ENCODE measurements at regions of chr18 and their contacts with region 1.

Region 1: DNA sequence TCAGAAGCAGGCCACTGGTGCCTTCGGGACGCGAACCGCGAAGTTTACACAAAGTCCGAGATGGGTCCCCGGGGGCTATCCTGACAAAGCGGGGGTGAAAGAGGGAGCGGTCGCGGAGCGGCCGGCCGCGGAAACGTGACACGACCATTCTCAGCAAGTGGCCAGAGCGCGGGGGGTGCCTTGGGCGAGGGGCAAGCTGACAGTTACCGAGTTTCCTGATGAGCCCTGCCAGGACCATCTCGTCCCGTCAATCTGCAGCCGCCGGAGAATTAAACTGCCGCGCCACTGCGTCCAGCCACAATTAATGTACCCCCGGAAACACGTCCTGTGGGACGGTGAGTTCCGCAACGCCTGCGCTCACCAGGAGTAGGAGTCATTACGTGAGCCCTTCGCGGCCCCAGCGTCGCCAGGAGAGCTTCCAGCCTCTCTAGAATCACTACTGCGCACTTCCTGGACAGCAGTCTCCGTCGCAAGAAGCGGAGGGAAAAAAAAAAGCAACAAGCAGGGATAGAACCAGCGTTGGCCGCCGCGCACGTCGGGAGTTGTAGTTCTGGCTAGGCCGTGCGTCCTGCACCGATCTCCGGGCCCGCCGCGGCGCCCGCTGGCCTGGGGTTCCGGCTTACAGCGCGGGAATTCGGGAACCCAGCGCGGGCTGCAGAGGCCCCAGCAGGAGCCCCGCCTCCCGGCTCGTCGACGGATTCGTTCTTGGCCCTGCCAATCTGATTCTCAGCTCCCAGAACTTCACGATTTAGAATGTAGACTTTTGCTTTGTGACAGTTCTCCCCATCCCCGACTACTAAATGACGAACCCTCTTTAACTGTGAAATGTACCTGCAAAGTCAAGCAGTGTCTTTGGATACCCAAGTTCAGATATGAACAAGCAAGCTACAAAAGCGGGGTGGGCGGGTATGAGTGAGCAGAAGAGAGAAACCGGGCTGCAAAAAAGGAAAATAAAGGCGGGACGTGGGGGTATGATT is at the start of gene RTTN:
- DNase-seq: peak; percentile 81 to 91
- ATAC-seq: peak; percentile 95 to 97
- H3K4me3 ChIP-seq: peak within 1 kb of the TSS; percentile 65 to 91 (median 87)
- H3K27ac ChIP-seq: peak within 1 kb of the TSS; percentile 89 to 97 (median 94)
- H3K4me1 ChIP-seq: peaks cover 10 to 18% of the 10 kb centered on the region in 2 donors
- H3K27me3 ChIP-seq: no peaks in the 10 kb centered on the region
- CTCF ChIP-seq: peak in 2 of 5 experiments; percentile 10 to 40
- POLR2A ChIP-seq: peak in 1 of 2 donors; percentile 18
- total RNA-seq, gene RTTN: 3.2 to 9.7 (median 4.9) TPM

Region 2: DNA sequence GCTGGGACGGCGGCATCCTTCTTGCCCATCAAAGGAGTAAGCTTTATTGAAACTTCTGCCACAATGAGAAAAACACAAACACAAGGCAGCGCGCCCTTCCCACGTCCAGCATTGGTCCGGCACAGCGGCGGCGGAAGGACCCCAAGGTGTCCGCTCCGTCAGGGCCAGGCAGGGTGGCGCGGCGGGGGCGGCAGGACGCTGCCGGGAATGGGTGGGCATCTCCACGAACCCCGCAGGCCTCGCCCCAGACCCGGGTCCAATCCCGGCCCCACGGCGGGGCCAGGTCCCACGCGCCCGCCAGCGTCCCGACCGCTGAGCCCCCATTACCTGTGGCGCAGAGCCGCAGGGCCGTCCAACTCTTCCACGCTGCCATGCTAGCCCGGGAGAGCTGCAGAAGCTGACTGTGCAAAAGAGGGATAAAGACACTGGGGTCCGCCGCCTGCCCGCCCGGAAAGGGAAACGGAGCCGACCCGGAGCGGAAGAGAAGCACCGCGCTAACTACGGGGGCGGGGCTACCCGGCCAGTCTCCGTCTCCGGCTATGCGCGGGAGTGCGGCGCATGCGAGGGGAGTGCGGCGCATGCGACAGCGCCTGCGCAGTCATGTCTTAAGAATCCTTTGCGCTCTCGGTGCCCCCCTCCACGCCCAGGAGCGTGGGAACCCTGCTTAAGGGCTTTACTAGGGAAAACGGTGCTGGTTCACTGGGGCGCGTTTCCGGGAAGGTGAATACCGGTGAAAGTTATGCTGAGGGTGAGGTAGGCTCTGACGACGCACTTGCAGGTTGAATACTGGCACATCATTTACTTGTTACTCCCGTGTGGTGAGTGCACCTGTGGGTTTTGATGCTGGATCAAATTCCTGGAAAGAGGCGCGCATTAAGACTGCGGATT is 1490.9 kb before region 1 on chr18 and contains the start of gene TMX3:
- in situ Hi-C with region 1: no loop called
- intact Hi-C with region 1: loop called (anchors 10 kb)
- DNase-seq: peak; percentile 64 to 81
- ATAC-seq: peak; percentile 94 to 95
- H3K4me3 ChIP-seq: peak within 1 kb of the TSS; percentile 82 to 99 (median 90)
- H3K27ac ChIP-seq: peak within 1 kb of the TSS; percentile 72 to 83 (median 77)
- H3K4me1 ChIP-seq: peaks cover 16 to 20% of the 10 kb centered on the region in 2 donors
- H3K27me3 ChIP-seq: no peaks in the 10 kb centered on the region
- CTCF ChIP-seq: no peak
- POLR2A ChIP-seq: peak in 1 of 2 donors; percentile 13
- total RNA-seq, gene TMX3: 13.7 to 23.3 (median 16.7) TPM

Region 3: GRCh38 chr18:70288851-70289328 is 83.2 kb after region 1 on chr18 and contains the start of gene SOCS6:
- in situ Hi-C with region 1: loop called in 1 of 4 experiments (anchors 10 kb)
- intact Hi-C with region 1: loop called (anchors 5 kb)
- DNase-seq: peak; percentile 13 to 41
- ATAC-seq: peak; percentile 67 to 72
- H3K4me3 ChIP-seq: peak within 1 kb of the TSS; percentile 68 to 74 (median 72)
- H3K27ac ChIP-seq: peak within 1 kb of the TSS; percentile 75 to 91 (median 90)
- H3K4me1 ChIP-seq: peaks cover 33 to 34% of the 10 kb centered on the region in 2 donors
- H3K27me3 ChIP-seq: no peaks in the 10 kb centered on the region
- CTCF ChIP-seq: no peak
- POLR2A ChIP-seq: peak in 1 of 2 donors; percentile 20
- total RNA-seq, gene SOCS6: 12.8 to 26.8 (median 16.3) TPM

Region 4: DNA sequence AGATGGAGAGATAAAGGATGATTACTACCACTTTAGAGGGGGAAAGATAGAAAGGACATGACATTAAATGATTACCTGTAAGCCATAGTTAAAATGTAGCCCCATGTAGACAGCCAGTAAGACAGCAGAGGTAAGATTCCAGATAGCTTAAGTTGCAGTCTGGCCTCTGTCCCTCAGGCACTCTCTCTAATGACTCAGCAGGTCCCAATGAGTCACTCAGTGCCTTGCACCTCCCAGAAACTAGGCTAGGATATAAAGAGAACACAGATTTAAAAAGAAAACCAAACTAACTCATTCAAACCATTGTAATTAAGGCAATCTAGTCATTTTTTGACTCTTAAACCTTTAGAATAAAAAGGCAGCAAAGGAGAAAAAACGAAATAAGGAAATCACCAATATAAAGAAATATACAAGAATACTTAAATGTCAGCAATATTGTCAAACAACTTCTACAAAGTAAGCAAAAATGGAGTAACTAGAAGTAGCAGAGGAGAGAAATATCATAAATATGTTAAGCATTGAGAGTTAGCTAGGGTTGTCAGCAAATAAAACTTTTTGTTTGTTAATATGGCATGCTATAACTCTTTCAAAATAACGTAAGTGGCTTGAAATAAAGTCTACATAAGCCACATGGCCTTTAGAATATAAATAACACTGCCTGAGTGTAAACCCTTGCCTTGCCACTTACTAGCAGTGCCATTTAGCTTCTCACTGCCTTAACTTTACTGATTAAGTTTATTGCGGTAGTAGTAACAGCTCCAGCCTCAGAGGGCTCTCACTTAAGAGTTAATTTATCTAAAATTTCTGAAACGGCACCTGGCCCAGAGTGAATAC is 131.6 kb after region 1 on chr18:
- in situ Hi-C with region 1: no loop called
- intact Hi-C with region 1: loop called (anchors 5 kb)
- DNase-seq: peak; percentile 73 to 85
- ATAC-seq: peak; percentile 99 to 100
- H3K4me3 ChIP-seq: peak overlapping the region in 2 of 4 donors; percentile 21 to 23
- H3K27ac ChIP-seq: peak overlapping the region; percentile 82 to 91 (median 87)
- H3K4me1 ChIP-seq: peaks cover 33% of the 10 kb centered on the region in 2 donors
- H3K27me3 ChIP-seq: no peaks in the 10 kb centered on the region
- CTCF ChIP-seq: no peak
- POLR2A ChIP-seq: no peak

Region 5: DNA sequence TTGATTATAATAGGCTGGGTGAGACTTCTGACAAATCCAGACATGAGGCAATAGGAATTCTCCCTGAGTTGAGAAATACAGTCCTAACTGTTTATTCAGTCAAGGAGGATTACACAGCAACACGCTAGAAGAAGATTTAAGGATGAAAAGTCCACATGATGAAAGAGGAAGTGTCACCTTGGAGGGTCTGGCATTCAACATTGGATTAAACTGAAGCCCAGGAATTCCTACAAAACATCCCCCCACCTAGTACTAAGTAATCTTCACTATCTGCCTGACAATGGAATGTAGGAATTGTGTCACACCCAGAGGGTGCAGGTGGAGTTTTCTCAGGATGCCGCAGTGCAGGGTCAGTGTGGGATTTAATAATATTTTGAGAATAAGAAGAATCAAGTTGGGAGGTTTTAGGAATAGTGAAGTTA is 225.5 kb after region 1 on chr18:
- in situ Hi-C with region 1: no loop called
- intact Hi-C with region 1: loop called (anchors 2 kb)
- DNase-seq: no peak
- ATAC-seq: no peak
- H3K4me3 ChIP-seq: no peak overlapping the region
- H3K27ac ChIP-seq: no peak overlapping the region
- H3K4me1 ChIP-seq: no peaks in the 10 kb centered on the region
- H3K27me3 ChIP-seq: no peaks in the 10 kb centered on the region
- CTCF ChIP-seq: no peak
- POLR2A ChIP-seq: no peak

Measured in gastrocnemius medialis (tissue), 4 donors.